K562 (cell line): ENCODE measurements at regions of chr15 and their contacts with region 1.

Region 1: DNA sequence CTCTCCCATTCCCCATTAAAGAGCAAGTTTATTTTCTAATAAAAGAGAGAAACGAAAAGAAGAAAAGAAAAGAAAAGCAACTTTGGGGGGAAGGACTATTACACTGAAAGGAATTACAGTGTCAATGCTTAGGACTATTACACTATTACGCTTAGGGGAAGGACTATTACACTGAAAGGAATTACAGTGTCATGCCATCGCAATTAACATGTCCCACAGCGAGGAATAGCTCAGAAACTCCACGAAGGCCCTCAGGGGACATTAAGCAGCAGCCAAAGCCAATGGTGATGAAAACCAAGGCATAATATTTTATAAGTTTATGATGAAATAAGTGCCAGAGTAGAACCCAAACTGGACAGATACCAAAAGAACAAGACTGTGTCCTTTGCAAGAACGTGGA is 22.1 kb upstream of the DET1 start:
- DNase-seq: no peak
- ATAC-seq: no peak
- H3K4me3 ChIP-seq: no peak overlapping the region
- H3K27ac ChIP-seq: no peak overlapping the region
- H3K4me1 ChIP-seq: peaks cover 10 to 18% of the 10 kb centered on the region in 2 experiments
- H3K27me3 ChIP-seq: peaks cover 0 to 1% of the 10 kb centered on the region in 2 experiments; a peak in 2 of 5 replicates
- CTCF ChIP-seq: no peak
- EP300 ChIP-seq: no peak
- POLR2A ChIP-seq: no peak
- RAD21 ChIP-seq: no peak

Region 2: GRCh38 chr15:88604381-88605188 is 36.0 kb after region 1 on chr15:
- CTCF ChIA-PET with region 1: no interaction called
- POLR2A ChIA-PET with region 1: no interaction called
- in situ Hi-C with region 1: no loop called
- intact Hi-C with region 1: loop called (anchors 5 kb)
- DNase-seq: no peak
- ATAC-seq: no peak
- H3K4me3 ChIP-seq: no peak overlapping the region
- H3K27ac ChIP-seq: no peak overlapping the region
- H3K4me1 ChIP-seq: peaks cover 0 to 19% of the 10 kb centered on the region in 2 experiments; a peak in 2 of 5 replicates
- H3K27me3 ChIP-seq: peaks cover 27 to 35% of the 10 kb centered on the region in 2 experiments
- CTCF ChIP-seq: no peak
- EP300 ChIP-seq: no peak
- POLR2A ChIP-seq: no peak
- RAD21 ChIP-seq: no peak

Region 3: DNA sequence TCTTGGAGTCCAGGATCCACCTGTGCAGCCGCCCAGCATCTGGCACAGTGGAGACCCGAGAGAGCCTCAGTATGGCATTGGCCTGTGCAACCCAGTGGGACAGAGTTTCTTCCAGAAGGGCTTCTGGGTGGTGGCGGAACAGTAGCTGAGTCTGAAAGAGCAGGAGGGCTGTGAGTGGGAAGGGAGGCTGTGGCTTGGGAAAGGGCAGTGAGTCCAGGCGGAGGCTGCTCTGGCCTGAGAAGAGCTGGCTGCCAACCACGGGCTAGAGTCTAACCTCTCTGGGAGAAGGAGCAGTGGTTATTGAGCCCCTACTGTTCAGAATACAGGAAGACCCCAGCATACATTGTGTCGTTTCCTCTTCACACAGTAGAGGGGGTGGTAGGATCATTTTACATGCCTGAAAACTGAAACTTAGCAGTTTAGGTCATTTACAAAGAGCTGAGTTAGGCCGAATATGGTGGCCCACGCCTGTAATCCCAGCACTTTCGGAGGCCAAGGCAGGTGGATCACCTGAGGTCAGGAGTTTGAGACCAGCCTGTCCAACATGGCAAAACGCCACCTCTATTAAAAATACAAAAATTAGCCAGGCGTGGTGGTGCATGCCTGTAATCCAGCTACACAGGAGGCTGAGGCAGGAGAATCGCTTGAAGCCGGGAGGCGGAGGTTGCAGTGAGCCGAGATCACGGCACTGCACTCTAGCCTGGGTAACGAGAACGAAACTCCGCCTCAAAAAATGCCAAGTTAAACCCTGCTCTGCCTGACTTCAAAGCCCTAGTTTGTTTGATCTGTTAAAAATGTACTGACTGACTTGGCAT is 55.8 kb after region 1 on chr15:
- CTCF ChIA-PET with region 1: no interaction called
- POLR2A ChIA-PET with region 1: no interaction called
- in situ Hi-C with region 1: no loop called
- intact Hi-C with region 1: no loop called
- DNase-seq: no peak
- ATAC-seq: no peak
- H3K4me3 ChIP-seq: no peak overlapping the region
- H3K27ac ChIP-seq: no peak overlapping the region; the same call in 2 of the 3 replicates
- H3K4me1 ChIP-seq: peaks cover 14 to 28% of the 10 kb centered on the region in 2 experiments; a peak in 4 of 5 replicates
- H3K27me3 ChIP-seq: no peaks in the 10 kb centered on the region
- CTCF ChIP-seq: peak in 2 of 3 experiments; percentile 41 to 55; a peak in 4 of 6 replicates
- EP300 ChIP-seq: no peak
- POLR2A ChIP-seq: no peak
- RAD21 ChIP-seq: peak in 1 of 2 experiments; percentile 26; a peak in 1 of 4 replicates

Region 4: GRCh38 chr15:88690331-88690730 is 121.7 kb after region 1 on chr15:
- CTCF ChIA-PET with region 1: no interaction called
- POLR2A ChIA-PET with region 1: no interaction called
- in situ Hi-C with region 1: no loop called
- intact Hi-C with region 1: no loop called
- DNase-seq: no peak
- ATAC-seq: peak; percentile 55; the same call in 2 of the 3 replicates
- H3K4me3 ChIP-seq: no peak overlapping the region
- H3K27ac ChIP-seq: no peak overlapping the region
- H3K4me1 ChIP-seq: no peaks in the 10 kb centered on the region
- H3K27me3 ChIP-seq: peaks cover 22 to 44% of the 10 kb centered on the region in 2 experiments; a peak in 3 of 5 replicates
- CTCF ChIP-seq: no peak
- EP300 ChIP-seq: no peak
- POLR2A ChIP-seq: no peak
- RAD21 ChIP-seq: no peak